ENCODE measurements at regions of chr7 and their contacts with region 1.

Region 1: DNA sequence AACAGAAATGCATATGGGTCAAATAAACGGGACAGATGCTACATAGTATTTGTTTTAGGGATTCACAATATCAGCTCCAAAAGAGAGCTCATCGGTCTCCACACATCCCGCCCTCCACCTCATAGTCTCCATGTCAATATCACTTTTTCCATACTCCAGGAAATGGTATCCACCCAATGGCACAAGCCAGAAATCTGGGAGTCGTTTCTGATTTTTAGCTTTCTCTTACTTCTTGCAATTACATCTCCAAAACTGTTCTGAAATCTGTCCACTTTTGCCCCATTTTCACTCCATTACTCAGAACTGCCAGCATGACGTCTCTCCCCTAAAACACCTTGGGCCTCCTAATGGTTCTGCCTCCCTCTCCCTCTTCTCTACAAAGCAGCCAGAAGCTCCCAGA is 47.4 kb upstream of the EZH2 start:
- DNase-seq: no peak
- ATAC-seq: no peak
- H3K4me3 ChIP-seq: no peak overlapping the region
- H3K27ac ChIP-seq: no peak overlapping the region
- H3K4me1 ChIP-seq: no peaks in the 10 kb centered on the region
- H3K27me3 ChIP-seq: no peaks in the 10 kb centered on the region
- CTCF ChIP-seq: no peak

Region 2: DNA sequence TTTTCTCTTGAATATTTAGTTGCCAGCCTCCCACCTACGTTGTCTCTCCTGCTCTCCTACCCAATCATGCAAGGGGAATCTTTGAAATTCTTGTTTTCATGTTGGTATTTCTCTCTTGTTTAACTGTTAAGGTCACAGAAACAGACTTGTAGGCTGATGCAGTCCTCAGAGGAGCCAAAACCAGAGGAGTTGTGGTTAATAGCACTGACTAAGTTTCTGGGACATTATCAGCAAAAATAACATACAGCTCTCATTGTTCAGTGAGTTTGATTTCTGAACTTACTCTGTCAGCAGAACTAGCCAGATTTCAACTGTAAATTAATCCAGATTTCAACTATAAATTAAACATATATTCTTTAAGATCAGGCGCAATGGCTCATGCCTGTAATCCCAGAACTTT is 243.9 kb before region 1 on chr7:
- intact Hi-C with region 1: no loop called
- DNase-seq: no peak
- ATAC-seq: no peak
- H3K4me3 ChIP-seq: no peak overlapping the region
- H3K27ac ChIP-seq: no peak overlapping the region
- H3K4me1 ChIP-seq: no peaks in the 10 kb centered on the region
- H3K27me3 ChIP-seq: no peaks in the 10 kb centered on the region
- CTCF ChIP-seq: no peak

Region 3: DNA sequence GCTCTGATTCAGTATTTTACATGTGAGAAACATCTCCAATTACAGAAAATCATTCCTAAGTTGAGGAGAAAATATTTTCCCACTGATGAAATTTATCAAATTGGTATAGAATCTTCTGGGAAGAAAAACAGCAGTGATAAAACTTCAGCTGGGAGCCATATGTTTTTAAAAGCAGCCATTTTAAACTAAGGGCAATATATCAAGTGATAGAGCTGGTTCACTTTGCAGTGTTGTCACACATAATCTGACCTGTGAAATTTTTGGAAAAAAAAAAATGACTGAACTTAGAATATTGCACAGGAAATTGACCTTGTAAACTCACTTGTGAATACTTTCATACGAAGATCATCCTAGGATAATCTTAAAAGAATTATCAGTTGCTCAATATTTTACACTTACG is 36.9 kb before region 1 on chr7:
- intact Hi-C with region 1: loop called (anchors 5 kb)
- DNase-seq: no peak
- ATAC-seq: no peak
- H3K4me3 ChIP-seq: no peak overlapping the region
- H3K27ac ChIP-seq: no peak overlapping the region
- H3K4me1 ChIP-seq: no peaks in the 10 kb centered on the region
- H3K27me3 ChIP-seq: no peaks in the 10 kb centered on the region
- CTCF ChIP-seq: no peak

Region 4: DNA sequence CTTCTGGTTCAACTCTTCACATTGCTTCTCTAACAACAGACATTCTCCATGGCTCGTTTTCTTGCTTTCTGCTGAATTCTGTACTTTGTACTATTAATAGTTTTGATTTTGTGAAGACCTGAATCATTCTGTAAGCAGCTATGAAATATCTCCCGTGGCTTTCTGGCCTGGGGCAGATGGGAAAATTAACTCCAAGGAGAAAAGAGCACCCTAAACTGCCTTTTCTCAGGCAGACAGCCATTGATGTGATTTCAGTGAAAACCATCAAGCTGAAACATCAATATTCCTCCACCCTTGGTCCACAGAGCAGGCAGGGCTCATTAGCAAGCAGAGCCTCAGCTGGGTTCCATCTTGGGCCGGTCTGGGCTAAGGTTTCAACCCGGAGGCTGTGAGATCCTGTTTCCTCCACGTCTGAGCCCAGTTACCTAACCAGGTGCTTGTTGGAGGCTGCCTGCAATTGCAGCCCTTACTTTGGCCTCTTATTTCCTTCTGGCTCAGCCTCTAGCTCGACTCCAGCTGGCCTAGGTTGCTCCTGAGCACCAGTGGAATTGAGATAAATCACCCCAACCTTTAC is 26.3 kb before region 1 on chr7:
- intact Hi-C with region 1: no loop called
- DNase-seq: no peak
- ATAC-seq: no peak
- H3K4me3 ChIP-seq: no peak overlapping the region
- H3K27ac ChIP-seq: no peak overlapping the region
- H3K4me1 ChIP-seq: no peaks in the 10 kb centered on the region
- H3K27me3 ChIP-seq: peaks cover 0 to 15% (median 0%) of the 10 kb centered on the region in 3 donors
- CTCF ChIP-seq: no peak